H1 (cell line): ENCODE measurements at regions of chr17 and their contacts with region 1.

Region 1: GRCh38 chr17:56486732-56487131 is 106.8 kb upstream of the NOG start:
- DNase-seq: no peak
- H3K4me3 ChIP-seq: no peak overlapping the region
- H3K27ac ChIP-seq: no peak overlapping the region
- H3K4me1 ChIP-seq: no peaks in the 10 kb centered on the region
- H3K27me3 ChIP-seq: peaks cover 0 to 1% (median 0%) of the 10 kb centered on the region in 4 experiments; a peak in 1 of 7 replicates
- CTCF ChIP-seq: no peak
- EP300 ChIP-seq: no peak
- POLR2A ChIP-seq: no peak
- RAD21 ChIP-seq: no peak

Region 2: DNA sequence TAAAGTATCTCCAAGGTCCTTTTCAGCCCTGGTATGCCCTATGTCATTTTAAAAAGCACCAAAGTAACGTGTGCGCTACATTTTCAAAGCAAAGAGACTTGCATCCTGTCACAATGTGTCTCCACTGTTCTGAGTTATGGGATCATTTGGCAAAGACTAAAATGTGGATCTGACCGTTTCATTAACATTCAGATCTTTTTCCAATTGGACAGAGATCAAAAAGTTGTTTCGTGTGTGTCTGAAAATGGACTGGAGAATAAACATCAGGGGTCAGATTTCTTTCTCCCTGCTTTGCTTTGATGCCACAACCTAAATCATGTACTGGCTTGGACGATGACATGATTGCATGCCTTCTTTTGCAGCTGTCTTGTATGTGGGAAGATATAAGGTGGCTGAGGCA is 29.2 kb before region 1 on chr17:
- CTCF ChIA-PET with region 1: no interaction called
- POLR2A ChIA-PET with region 1: no interaction called
- DNase-seq: no peak
- H3K4me3 ChIP-seq: no peak overlapping the region
- H3K27ac ChIP-seq: no peak overlapping the region
- H3K4me1 ChIP-seq: no peaks in the 10 kb centered on the region
- H3K27me3 ChIP-seq: no peaks in the 10 kb centered on the region
- CTCF ChIP-seq: no peak
- EP300 ChIP-seq: no peak
- POLR2A ChIP-seq: no peak
- RAD21 ChIP-seq: no peak

Region 3: GRCh38 chr17:56475116-56475515 is 11.6 kb before region 1 on chr17:
- CTCF ChIA-PET with region 1: interaction called, 10 read pairs
- POLR2A ChIA-PET with region 1: no interaction called
- DNase-seq: no peak
- H3K4me3 ChIP-seq: no peak overlapping the region
- H3K27ac ChIP-seq: no peak overlapping the region
- H3K4me1 ChIP-seq: no peaks in the 10 kb centered on the region
- H3K27me3 ChIP-seq: no peaks in the 10 kb centered on the region
- CTCF ChIP-seq: no peak
- EP300 ChIP-seq: no peak
- POLR2A ChIP-seq: no peak
- RAD21 ChIP-seq: no peak

Region 4: DNA sequence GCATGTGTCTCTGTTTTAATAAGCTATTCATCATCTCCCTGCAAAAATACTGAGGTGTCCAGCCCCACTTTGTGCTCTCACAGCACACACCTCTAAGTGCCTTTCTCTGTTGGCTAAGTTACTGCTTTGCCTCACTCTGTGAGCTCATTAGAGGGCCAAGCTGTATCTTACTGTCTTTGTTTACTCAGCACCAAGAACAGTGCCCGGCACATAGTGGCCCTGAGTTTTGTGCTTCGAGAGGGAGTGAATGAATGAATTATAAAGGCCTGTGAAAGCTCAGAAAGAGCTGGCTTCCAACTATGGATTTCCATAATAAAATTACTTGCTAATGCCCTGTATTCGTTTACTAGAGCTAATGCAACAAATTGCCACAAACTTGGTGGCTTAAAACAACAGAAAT is 56.6 kb after region 1 on chr17:
- CTCF ChIA-PET with region 1: no interaction called
- POLR2A ChIA-PET with region 1: no interaction called
- DNase-seq: no peak
- H3K4me3 ChIP-seq: no peak overlapping the region
- H3K27ac ChIP-seq: no peak overlapping the region
- H3K4me1 ChIP-seq: peaks cover 0 to 4% (median 2%) of the 10 kb centered on the region in 4 experiments; a peak in 4 of 7 replicates
- H3K27me3 ChIP-seq: no peaks in the 10 kb centered on the region
- CTCF ChIP-seq: no peak
- EP300 ChIP-seq: no peak
- POLR2A ChIP-seq: no peak
- RAD21 ChIP-seq: no peak